Spleen (tissue), 13 donors: ENCODE measurements at regions of chr6 and their contacts with region 1.

Region 1: GRCh38 chr6:97186416-97186999 is 96.5 kb downstream of the MMS22L start:
- DNase-seq: peak; percentile 62
- H3K4me3 ChIP-seq: no peak overlapping the region
- H3K27ac ChIP-seq: no peak overlapping the region
- H3K4me1 ChIP-seq: no peaks in the 10 kb centered on the region
- H3K27me3 ChIP-seq: no peaks in the 10 kb centered on the region
- CTCF ChIP-seq: peak; percentile 40 to 82 (median 72)
- POLR2A ChIP-seq: no peak

Region 2: DNA sequence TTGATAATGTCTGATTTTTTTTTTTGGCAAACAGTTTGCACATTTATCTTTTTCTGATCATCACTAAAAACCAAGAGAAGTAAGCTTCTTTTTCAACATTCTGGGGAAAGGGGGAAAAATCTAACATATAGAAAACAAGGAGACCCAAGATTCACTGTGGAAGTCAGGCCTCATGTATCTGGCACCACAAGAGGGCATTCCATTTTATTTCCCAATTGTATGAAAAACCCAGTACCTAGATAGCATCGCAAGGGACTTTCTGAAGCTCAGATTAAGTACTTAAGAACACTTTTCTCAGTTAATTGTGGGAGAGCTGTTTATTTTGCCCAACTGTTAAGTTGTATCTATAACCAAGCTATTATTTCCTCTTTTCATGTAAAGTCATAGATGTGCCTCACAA is 109.1 kb before region 1 on chr6:
- intact Hi-C with region 1: loop called (anchors 5 kb)
- DNase-seq: no peak
- H3K4me3 ChIP-seq: no peak overlapping the region
- H3K27ac ChIP-seq: no peak overlapping the region
- H3K4me1 ChIP-seq: no peaks in the 10 kb centered on the region
- H3K27me3 ChIP-seq: no peaks in the 10 kb centered on the region
- CTCF ChIP-seq: no peak
- POLR2A ChIP-seq: no peak

Region 3: DNA sequence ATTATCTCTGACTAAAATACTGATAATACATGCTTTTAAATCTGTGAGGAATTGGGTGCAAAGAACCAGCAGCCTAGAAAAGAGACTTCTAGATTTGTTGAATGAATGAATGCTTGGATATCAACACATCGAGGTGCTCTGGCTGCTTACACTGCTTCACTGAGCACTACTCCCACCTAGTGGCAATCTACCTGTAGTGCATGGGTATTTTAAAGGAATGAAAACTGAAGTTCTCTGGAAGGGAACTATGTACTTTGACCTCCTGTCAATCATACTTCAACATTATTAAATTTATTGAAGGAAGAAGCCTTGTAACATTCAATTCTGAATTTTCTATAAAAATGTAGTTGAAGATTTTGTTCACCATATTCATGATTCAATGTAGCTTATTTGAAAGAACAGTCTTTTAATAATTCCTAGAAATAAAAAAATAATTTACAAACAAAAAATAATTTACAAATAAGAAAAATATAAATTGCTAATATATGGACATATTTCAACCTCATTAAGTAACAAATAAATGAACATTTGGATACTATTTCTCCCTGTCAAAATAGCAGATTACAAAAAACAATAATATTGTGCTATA is 207.7 kb after region 1 on chr6:
- intact Hi-C with region 1: loop called (anchors 10 kb)
- DNase-seq: no peak
- H3K4me3 ChIP-seq: no peak overlapping the region
- H3K27ac ChIP-seq: no peak overlapping the region
- H3K4me1 ChIP-seq: no peaks in the 10 kb centered on the region
- H3K27me3 ChIP-seq: no peaks in the 10 kb centered on the region
- CTCF ChIP-seq: peak; percentile 59 to 89 (median 79)
- POLR2A ChIP-seq: no peak